ENCODE measurements at regions of chr2 and their contacts with region 1.

Region 1: DNA sequence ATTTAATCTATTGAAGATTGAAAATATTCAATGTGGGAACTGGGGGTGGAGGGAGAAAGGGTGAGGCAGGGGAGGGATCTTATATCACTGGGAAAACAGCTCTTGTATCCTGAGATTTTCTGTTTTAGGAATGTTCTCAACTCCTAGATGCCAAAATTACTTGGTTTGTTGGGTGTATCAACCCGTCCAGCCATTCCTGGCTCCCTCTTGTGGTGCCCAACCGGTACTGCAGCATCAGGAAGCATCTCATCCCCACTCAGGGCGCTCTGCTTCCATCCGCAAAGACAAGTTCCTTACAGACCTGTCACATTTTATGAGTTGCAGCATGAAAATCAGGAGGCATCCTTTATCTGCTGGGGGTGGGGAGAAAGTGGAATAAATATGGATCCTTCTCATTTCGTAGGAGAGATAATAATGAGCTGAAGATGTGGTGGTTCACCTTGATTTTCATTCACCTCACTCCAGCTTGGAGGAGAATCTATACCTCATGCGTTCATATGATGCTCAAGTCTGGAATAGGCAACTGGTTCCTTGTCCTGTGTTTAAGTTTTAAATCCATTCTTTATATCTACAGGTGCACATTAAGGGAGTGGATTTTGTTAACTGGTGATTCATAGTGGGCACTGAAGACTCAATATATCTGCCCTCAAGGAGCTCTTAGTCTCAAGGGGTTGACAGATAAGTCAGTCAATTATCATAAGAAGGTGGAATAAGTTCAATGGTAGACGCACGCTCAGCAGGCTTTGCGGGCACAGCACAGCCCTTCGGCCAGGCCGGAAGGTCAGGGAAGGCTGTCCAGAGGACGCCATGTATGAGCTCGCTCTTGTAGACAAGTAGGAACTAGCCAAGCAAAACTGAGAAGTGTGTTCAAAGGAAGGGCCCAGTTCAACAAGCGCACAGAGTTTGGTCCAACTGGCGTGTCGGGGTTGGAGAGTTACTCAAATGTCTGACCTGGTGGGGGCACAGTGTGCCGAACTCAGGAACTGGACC is 127.3 kb downstream of the RNF144A start:
- DNase-seq: peak; percentile 57 to 74 (median 72)
- ATAC-seq: peak; percentile 90
- H3K4me3 ChIP-seq: no peak overlapping the region
- H3K4me1 ChIP-seq: no peaks in the 10 kb centered on the region
- CTCF ChIP-seq: peak; percentile 90

Region 2: GRCh38 chr2:6896930-6897759 is 147.4 kb before region 1 on chr2:
- intact Hi-C with region 1: loop called (anchors 5 to 10 kb)
- DNase-seq: no peak
- ATAC-seq: peak; percentile 45
- H3K4me3 ChIP-seq: no peak overlapping the region
- H3K4me1 ChIP-seq: no peaks in the 10 kb centered on the region
- CTCF ChIP-seq: peak; percentile 63

Measured in mucosa of descending colon (tissue), 3 donors.